Posterior vena cava (tissue), 2 donors: ENCODE measurements at regions of chr3 and their contacts with region 1.

Region 1: DNA sequence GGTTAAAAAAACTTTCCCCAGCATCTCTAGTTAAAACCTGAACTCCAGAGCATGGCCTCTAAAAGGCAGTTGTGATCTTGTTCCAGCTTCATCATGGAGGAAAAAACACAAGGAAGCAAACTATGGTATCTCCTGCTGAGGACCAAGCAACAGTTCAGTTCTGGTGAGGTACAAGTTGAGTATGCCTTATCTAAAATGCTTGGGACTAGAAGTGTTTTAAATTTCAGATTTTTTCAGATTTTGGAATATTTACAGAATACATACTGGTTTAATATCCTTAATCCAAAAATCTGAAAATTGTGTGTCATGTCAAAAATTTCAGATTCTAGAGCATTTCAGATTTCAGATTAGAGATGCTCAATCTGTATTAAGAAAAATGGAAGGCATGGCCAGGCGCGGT is 9.7 kb downstream of the DBR1 start:
- DNase-seq: no peak

Region 2: DNA sequence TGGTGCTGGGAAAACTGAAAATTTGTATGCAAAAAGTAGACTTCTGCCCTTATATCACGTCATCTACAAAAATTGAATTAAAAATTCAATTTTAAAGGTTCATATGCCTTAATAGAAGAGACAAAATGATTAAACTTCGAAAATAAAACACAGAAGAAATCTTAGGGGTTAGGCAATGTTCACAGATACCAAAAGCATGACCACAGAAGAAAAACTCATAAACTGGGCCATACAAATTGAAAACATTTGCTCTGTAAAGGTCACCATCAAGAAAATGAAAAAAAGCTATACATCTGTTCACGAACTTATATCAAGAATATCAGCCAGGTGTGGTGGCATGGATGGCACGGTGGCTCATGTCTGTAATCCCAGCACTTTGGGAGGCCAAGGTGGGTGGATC is 1669.8 kb before region 1 on chr3:
- intact Hi-C with region 1: loop called in 1 of 2 experiments (anchors 10 kb)
- DNase-seq: no peak